Sigmoid colon (tissue), 7 donors: ENCODE measurements at regions of chr6 and their contacts with region 1.

Region 1: DNA sequence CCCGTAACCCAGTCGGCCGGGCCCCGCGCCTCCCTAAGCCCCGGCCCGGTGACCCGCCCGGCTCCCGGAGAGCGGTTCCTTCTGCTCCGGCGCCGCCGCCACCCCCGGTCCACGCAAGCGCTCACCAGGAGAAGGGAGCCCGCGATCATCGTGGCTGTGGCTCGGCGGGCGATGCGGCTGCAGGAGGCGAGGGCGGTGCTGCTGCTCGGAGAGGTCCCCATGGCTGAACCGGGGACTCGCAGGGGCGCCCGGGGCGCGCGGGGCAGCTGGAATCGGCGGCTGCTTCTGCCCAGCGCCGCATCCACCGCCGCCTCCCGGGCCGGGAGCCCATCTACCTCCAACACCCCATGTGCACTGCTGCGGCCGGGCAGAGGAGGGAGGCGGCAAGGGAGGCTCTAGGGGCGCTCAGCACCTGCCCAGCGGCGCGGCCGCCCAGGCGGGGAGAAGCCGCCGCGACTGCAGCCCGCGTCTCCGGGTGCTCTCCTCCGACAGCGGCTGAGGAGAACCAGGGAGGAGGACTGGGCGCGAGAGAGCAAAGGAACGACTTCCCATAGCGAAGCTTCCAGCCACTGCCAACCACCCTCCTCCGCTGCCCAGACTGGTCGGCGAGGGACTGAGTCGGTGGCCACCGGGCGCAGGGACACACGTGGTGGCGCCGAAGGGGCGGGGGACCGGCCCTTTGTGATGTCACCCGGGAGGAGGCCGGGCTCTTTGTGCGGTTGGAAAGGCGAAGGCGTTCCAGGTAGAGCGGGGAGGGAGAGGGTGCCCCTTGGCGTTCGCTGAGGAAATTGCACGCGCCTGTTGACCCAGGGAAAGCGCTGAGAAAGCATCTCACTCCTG is at the start of gene TNFRSF21:
- DNase-seq: peak; percentile 96
- H3K4me3 ChIP-seq: peak within 1 kb of the TSS; percentile 49 to 93 (median 69)
- H3K27ac ChIP-seq: peak within 1 kb of the TSS; percentile 78 to 93 (median 86)
- H3K4me1 ChIP-seq: peaks cover 0 to 43% (median 22%) of the 10 kb centered on the region in 4 donors
- H3K27me3 ChIP-seq: no peaks in the 10 kb centered on the region
- CTCF ChIP-seq: peak; percentile 86 to 97 (median 93)
- EP300 ChIP-seq: no peak
- POLR2A ChIP-seq: peak; percentile 48 to 91
- total RNA-seq, gene TNFRSF21: 15.8 to 25.3 (median 20.6) TPM

Region 2: GRCh38 chr6:47097092-47097945 is 212.2 kb before region 1 on chr6:
- intact Hi-C with region 1: loop called (anchors 1 kb)
- DNase-seq: peak; percentile 82
- H3K4me3 ChIP-seq: no peak overlapping the region
- H3K27ac ChIP-seq: peak overlapping the region in 3 of 4 donors; percentile 21 to 32 (median 25)
- H3K4me1 ChIP-seq: peaks cover 0 to 29% (median 4%) of the 10 kb centered on the region in 4 donors
- H3K27me3 ChIP-seq: no peaks in the 10 kb centered on the region
- CTCF ChIP-seq: peak; percentile 46 to 71 (median 66)
- EP300 ChIP-seq: no peak
- POLR2A ChIP-seq: no peak

Region 3: GRCh38 chr6:47264775-47265184 is 44.7 kb before region 1 on chr6:
- intact Hi-C with region 1: no loop called
- DNase-seq: no peak
- H3K4me3 ChIP-seq: no peak overlapping the region
- H3K27ac ChIP-seq: peak overlapping the region in 1 of 4 donors; percentile 21
- H3K4me1 ChIP-seq: peaks cover 0 to 14% (median 6%) of the 10 kb centered on the region in 4 donors
- H3K27me3 ChIP-seq: no peaks in the 10 kb centered on the region
- CTCF ChIP-seq: no peak
- EP300 ChIP-seq: no peak
- POLR2A ChIP-seq: no peak